ENCODE measurements at regions of chr17 and their contacts with region 1.

Region 1: GRCh38 chr17:49548506-49549310 is 27.0 kb upstream of the NXPH3 start:
- DNase-seq: peak; percentile 79
- H3K4me3 Mint-ChIP-seq: no peak overlapping the region
- H3K27ac Mint-ChIP-seq: no peak overlapping the region
- H3K4me1 Mint-ChIP-seq: no peaks in the 10 kb centered on the region
- H3K27me3 Mint-ChIP-seq: peaks cover 49% of the 10 kb centered on the region
- CTCF ChIP-seq: peak; percentile 69

Region 2: GRCh38 chr17:49390548-49391324 is 158.0 kb before region 1 on chr17:
- CTCF ChIA-PET with region 1: no interaction called
- intact Hi-C with region 1: no loop called
- DNase-seq: peak; percentile 52
- H3K4me3 Mint-ChIP-seq: no peak overlapping the region
- H3K27ac Mint-ChIP-seq: peak overlapping the region; percentile 2
- H3K4me1 Mint-ChIP-seq: peaks cover 14% of the 10 kb centered on the region
- H3K27me3 Mint-ChIP-seq: peaks cover 13% of the 10 kb centered on the region
- CTCF ChIP-seq: no peak

Region 3: GRCh38 chr17:49407981-49408501 is 140.7 kb before region 1 on chr17:
- CTCF ChIA-PET with region 1: interaction called, 5 read pairs
- intact Hi-C with region 1: loop called (anchors 2 kb)
- DNase-seq: peak; percentile 89
- H3K4me3 Mint-ChIP-seq: no peak overlapping the region
- H3K27ac Mint-ChIP-seq: no peak overlapping the region
- H3K4me1 Mint-ChIP-seq: peaks cover 19% of the 10 kb centered on the region
- H3K27me3 Mint-ChIP-seq: no peaks in the 10 kb centered on the region
- CTCF ChIP-seq: peak; percentile 98

Region 4: DNA sequence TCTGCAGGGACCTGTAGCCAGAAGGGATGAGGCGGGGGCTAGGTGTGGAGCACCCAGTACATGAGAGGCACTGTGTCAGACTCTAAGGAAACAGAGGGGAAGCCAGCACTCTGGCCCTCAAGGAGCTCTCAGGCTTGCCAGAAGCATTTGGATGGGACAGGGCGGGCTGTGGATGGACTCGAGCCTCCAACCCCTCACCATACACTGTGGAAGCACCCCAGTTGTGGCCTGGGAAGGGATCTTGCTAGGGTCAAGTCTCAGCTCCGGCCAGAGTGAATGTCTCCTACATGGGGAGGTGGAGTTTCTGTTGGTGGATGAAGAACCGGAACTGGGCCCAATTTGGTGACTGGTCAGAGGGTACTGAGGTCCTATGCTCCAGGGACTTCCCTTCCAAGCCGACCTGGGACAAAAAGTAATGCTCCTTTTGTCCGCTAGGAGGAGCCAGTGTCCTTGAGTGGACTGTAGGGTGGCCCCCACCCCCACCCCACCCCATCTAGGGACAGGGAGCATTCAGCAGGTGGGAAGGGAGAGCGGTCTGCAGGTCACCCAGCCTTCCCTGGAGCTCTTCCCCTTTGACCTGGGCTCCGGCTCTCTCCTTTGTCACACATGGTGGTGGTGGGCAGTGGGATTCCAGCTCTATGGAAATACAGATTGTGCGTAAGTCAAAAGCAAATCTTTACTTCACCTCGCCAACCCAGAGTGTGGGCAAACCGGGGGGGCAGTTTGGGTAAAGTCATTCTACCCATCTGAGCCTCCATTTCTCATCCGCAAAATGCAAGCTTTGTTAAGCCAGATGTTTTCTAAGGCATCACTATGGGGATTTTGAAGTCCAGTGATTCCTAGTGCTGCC is 113.7 kb before region 1 on chr17:
- CTCF ChIA-PET with region 1: no interaction called
- intact Hi-C with region 1: loop called (anchors 2 kb)
- DNase-seq: peak; percentile 81
- H3K4me3 Mint-ChIP-seq: no peak overlapping the region
- H3K27ac Mint-ChIP-seq: no peak overlapping the region
- H3K4me1 Mint-ChIP-seq: no peaks in the 10 kb centered on the region
- H3K27me3 Mint-ChIP-seq: peaks cover 65% of the 10 kb centered on the region
- CTCF ChIP-seq: peak; percentile 93

Region 5: DNA sequence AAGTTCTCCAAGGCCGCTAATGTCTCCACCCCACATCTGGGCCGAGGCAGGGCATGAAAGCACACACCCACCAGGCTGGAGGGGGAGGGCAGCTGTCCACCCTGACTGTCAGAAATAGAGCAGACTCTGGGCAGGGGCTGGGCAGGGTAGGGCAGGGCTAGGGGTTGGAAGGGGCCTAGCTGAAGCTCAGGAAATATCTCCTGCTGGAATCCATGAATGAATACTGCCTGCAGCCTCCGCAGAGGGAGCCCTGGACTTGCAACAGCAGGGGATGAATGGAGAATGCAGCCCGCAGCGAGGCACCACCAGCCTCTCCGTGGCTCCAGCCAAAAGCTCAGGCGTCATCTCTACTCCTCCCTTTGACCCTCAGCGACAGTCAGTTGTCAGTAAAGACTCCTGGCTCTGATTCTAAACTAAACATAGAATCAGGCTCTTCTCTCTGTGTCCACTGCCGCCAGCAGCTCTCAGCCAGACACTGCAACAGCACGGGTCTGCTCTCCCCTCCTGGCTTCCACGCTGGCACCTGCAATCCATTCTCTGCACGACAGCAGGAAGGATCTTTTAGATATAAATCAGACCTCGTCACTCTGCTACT is 77.5 kb before region 1 on chr17:
- CTCF ChIA-PET with region 1: no interaction called
- intact Hi-C with region 1: no loop called
- DNase-seq: no peak
- H3K4me3 Mint-ChIP-seq: no peak overlapping the region
- H3K27ac Mint-ChIP-seq: no peak overlapping the region
- H3K4me1 Mint-ChIP-seq: no peaks in the 10 kb centered on the region
- H3K27me3 Mint-ChIP-seq: peaks cover 100% of the 10 kb centered on the region
- CTCF ChIP-seq: no peak

Region 6: GRCh38 chr17:49603720-49604119 is 55.0 kb after region 1 on chr17:
- CTCF ChIA-PET with region 1: no interaction called
- intact Hi-C with region 1: no loop called
- DNase-seq: no peak
- H3K4me3 Mint-ChIP-seq: no peak overlapping the region
- H3K27ac Mint-ChIP-seq: no peak overlapping the region
- H3K4me1 Mint-ChIP-seq: no peaks in the 10 kb centered on the region
- H3K27me3 Mint-ChIP-seq: no peaks in the 10 kb centered on the region
- CTCF ChIP-seq: no peak